Left cardiac atrium (tissue), 4 donors: ENCODE measurements at regions of chr1 and their contacts with region 1.

Region 1: DNA sequence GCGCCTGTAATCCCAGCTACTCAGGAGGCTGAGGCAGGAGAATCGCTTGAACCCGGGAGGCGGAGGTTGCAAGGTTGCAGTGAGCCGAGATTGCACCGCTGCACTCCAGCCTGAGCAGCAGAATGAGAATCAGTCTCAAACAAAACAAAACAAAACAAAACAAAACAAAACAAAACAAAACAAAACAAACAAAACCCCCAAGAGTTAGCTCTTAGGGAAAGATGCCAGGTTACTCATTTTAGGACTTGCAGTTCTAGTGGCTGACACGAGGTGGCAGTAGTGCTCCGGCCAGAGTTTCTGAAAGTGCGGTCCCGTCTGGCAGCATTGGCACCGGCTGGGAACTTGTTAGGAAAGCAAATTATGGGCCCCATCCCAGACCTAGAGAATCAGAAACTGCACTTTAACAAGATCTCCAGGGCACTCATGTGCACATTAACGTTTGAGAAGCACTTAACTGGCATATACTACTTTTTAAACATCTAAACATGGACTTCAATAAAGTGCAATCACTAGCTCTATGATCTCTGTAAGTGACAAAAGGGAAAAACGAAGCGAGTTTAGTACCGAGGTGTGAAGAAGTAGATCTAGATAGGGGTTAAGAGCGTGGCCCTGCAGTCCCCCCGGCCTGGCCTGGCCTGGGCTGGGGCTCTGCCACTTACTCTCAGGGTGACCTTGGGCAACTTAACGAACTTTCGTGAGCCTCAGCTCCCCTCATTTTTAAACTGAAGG is 41.9 kb upstream of the TNFRSF1B start:
- DNase-seq: peak; percentile 84
- ATAC-seq: peak; percentile 72 to 81

Region 2: DNA sequence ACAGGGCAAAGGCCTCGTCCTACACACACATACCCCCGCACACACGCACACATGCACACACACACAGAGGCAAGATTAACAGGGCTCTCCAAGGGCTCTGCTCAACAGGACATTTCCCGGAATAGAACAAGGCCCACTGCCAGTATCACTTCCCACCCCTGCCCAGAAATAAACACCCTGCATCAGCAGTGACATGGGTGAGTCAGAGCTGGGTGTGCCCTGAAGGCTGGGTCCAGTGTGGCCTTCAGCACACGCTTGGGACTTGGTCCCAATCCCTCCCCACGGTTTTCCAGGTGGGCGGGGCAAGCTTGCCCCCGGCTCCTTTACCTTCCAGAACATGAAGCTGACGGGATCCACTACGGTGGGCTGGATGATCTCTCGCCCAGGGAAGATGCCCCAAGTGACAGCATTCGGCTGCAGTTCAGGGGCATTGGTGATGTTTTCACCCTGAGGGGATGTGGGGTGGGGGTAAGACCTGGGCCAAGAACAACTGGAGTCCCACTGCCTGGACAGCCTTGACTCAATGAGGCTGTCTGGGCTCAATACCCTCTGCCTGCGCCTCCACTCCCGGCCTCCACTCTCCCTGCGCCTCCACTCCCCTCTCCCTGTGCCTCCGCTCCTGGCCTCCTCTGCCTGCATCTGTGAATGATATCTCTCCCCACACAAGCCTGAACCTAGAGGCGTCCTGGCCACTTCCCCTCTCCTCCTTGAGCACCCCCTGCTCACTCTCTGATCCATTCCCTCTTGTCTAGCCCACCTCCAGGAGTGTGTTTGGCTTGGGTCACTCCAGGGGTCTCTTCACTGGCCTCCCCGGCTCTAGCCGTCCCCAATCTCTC is 333.8 kb before region 1 on chr1:
- intact Hi-C with region 1: no loop called
- DNase-seq: peak; percentile 95
- ATAC-seq: peak; percentile 84 to 87

Region 3: DNA sequence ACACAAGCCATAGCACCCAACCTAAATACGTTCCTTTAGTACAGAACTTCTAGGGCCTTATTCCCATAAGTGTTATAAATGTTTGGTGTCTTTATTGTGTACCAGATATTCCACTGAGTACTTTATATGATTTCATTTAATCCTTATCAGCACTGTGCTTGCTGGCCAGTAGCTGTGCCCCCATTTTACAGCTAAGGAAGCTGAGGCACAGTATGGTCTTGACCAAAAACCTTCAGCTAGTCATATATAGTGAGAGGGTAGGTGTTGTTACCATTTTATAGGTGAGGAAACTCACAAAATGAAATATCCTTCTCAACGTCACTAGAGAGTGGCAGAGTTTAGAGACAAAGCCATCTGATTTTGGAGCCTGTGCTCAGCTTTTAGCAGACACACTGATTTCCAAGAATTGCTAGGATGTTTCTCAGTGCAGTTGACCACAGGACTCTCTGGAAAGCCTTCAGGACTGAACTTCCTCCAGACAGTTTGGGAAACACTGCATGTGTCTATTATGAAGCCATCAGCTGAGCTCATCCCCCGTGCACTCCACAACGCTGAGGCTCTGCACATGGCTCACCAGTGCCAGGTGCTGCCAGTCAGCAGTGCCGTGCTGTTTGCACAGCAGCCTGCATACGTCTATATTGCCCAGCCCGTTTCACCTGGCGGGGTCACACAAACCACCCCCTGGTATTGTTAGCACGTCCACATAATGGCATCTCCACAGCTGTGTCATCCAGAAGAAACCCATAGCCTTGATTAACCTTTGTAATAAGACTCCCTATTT is 292.7 kb before region 1 on chr1:
- intact Hi-C with region 1: no loop called
- DNase-seq: no peak
- ATAC-seq: no peak

Region 4: GRCh38 chr1:12063141-12064072 is 61.5 kb before region 1 on chr1 and contains the start of gene TNFRSF8:
- intact Hi-C with region 1: no loop called
- DNase-seq: no peak
- ATAC-seq: peak; percentile 10 to 24
- total RNA-seq, gene TNFRSF8: 2.2 to 3.3 TPM

Region 5: GRCh38 chr1:12208764-12209494 is 84.1 kb after region 1 on chr1:
- intact Hi-C with region 1: loop called (anchors 1 to 2 kb)
- DNase-seq: peak; percentile 88
- ATAC-seq: peak; percentile 87 to 92